AG04449 (cell line): ENCODE measurements at regions of chr6 and their contacts with region 1.

Region 1: GRCh38 chr6:33851959-33852358 is 48.2 kb upstream of the MLN start:
- DNase-seq: no peak
- H3K4me3 ChIP-seq: no peak overlapping the region
- CTCF ChIP-seq: peak; percentile 58

Region 2: DNA sequence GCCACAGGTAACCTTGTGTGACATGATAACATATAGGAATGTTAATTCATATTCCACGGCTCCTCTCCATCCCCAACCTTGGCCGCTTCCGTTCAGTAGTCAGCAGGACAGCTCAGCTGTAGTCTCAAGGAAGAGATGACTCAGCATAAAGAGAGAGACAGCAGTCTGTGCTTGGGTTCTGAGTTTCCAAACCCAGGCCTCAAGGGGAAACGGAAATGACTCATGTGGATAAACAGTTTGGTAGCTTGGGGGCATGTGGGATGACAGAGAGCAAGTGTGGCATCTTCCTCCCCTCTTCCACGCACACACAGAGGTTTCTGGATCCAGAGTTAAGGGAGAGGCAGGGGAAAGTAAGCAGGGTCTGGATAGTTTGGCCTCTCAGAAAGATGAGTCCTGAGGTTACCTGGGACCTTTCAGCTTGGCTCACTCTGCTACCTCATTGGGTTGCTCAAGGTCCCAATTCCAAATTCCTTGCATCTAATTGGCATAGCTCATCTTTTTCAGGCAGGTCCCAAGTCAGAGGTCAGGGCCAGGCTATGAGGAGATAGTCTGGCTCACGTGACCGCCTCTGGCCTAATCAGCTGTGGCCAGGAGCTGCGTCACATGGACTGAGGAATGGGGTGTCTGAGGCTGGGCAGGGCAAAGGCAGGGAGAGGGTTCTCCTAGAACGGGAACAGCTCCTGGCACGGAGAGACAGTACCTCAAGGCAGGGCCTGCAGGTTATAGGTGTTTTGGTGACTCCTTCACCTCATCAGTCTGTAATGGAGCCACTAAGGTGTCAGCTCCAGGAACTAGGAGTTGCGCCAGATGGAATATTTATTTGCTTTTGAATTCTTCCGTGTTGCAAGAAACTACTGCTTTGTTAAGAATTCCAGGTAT is 11.7 kb before region 1 on chr6:
- CTCF ChIA-PET with region 1: interaction called, 16 read pairs
- POLR2A ChIA-PET with region 1: interaction called, 3 read pairs
- DNase-seq: peak; percentile 89
- H3K4me3 ChIP-seq: no peak overlapping the region
- CTCF ChIP-seq: no peak

Region 3: GRCh38 chr6:34027445-34027936 is 175.5 kb after region 1 on chr6:
- CTCF ChIA-PET with region 1: interaction called, 13 read pairs
- POLR2A ChIA-PET with region 1: no interaction called
- DNase-seq: no peak
- H3K4me3 ChIP-seq: no peak overlapping the region
- CTCF ChIP-seq: peak; percentile 90